Natural killer cell (primary cell): ENCODE measurements at regions of chr22 and their contacts with region 1.

Region 1: DNA sequence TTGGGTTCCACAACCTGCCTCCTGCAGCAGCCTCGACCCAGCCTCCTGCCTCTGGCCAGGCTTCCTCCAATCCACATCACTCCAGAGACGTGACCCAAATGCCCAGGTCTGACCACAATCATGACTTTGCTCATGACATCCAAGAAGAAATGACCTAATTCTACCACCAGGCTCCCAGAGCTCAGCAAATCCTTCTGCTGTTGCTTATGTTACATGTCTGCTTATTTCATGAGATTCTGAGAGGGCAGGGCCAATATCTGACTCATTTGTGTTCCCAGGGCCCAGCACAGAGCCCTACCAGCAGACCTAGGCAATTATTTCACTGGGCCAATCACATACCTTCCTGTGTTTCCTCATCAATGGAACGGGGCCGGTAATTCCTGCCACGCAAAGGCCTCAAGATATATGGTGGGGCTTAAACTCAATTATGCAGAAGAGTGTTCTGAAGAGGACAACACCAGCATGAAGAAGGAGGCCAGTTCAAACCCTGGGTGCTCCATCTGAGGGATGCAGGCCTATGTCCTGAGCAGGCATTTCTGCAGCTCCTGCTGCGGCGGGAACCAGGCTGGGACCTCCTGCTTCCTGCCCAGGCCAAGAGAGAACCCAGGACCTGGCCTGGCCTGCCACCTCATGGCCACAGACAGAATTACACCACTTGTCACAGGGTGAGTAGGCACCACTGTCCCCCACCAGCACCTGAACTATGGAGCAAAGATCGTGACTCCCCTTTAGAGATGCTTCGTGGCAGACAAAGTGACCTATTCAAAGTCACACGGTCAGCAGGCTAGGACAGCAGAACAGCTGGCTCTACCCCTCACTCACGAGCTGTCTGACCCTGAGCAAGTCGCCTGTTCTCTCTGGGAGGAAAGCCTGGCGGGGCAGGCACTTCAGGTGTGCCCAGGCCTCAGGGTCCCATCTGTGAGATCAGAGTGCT is 5.9 kb downstream of the CENPM start:
- DNase-seq: peak; percentile 83 to 94
- ATAC-seq: peak; percentile 86 to 91 (median 88)
- H3K4me3 ChIP-seq: no peak overlapping the region
- H3K4me3 Mint-ChIP-seq: no peak overlapping the region
- H3K27ac ChIP-seq: peak overlapping the region; percentile 98
- H3K27ac Mint-ChIP-seq: peak overlapping the region; percentile 83 to 91
- H3K4me1 ChIP-seq: peaks cover 57% of the 10 kb centered on the region
- H3K4me1 Mint-ChIP-seq: peaks cover 19 to 29% of the 10 kb centered on the region in 2 donors
- H3K27me3 ChIP-seq: no peaks in the 10 kb centered on the region
- H3K27me3 Mint-ChIP-seq: no peaks in the 10 kb centered on the region
- CTCF ChIP-seq: peak; percentile 88

Region 2: DNA sequence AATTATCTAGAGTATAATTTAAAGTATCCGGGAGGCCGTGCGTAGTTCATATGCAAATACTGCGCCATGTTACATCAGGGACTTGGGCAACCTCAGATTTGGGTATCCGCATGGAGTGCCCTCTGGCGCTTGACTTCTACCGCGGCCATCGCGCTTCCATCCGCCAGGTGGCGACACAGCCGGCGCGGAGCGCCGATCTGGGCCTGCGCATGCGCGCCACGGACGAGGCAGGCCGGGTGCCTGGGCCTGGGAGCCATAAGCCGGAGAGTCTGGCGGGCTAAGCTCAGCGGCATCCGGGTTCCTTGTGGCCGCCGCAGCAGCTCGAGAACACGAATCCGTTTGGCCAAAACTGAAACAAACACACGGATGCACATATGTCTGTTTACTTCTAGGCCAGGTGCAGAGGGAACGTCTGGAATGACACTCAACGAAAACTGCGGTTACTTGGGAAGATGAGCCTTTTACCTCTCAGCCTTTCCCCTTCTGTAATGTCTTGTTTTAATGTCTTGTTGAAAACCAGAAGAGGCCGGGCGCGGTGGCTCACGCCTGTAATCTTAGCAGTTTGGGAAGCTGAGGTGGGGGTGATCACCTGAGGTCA is 274.3 kb before region 1 on chr22:
- intact Hi-C with region 1: loop called (anchors 1 kb)
- DNase-seq: peak; percentile 94 to 98
- ATAC-seq: peak; percentile 94 to 98 (median 95)
- H3K4me3 ChIP-seq: peak overlapping the region; percentile 50
- H3K4me3 Mint-ChIP-seq: peak overlapping the region; percentile 88
- H3K27ac ChIP-seq: peak overlapping the region; percentile 92
- H3K27ac Mint-ChIP-seq: peak overlapping the region; percentile 92 to 93
- H3K4me1 ChIP-seq: peaks cover 14% of the 10 kb centered on the region
- H3K4me1 Mint-ChIP-seq: peaks cover 10 to 11% of the 10 kb centered on the region in 2 donors
- H3K27me3 ChIP-seq: no peaks in the 10 kb centered on the region
- H3K27me3 Mint-ChIP-seq: no peaks in the 10 kb centered on the region
- CTCF ChIP-seq: peak; percentile 99

Region 3: DNA sequence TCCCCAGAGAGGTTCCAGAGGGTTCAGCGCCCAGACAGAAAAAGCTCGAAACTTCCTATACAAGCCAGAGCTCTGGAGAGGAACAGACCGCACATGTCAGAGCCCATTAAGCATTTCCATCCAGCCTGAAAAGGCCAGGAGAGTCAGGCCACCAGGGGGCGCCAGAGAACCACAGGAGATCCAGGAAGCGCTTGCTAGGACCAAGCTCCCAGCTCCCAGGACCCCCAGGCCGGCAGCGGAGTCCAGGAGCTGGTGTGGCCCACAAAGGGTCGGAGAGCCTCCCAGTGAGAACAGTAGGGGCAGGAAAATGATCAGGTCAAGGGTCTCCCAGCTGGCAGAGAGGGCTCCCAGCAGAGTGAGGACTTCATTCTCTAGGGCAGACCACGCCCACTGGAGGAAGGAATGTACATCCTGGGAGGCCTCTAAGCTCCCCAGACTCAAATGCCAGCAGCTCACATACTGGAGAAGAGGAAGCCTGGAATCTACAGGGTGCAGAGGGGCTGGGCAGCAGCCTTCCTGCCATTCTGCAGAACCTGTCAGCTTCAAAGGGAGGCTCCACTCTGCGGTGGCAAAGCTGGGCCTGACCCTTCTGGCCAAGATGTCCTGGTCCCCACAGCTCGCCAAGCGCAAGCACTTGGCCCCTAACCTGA is 243.8 kb before region 1 on chr22:
- intact Hi-C with region 1: loop called (anchors 1 kb)
- DNase-seq: peak; percentile 91 to 92
- ATAC-seq: peak; percentile 80 to 83 (median 81)
- H3K4me3 ChIP-seq: no peak overlapping the region
- H3K4me3 Mint-ChIP-seq: peak overlapping the region; percentile 61
- H3K27ac ChIP-seq: peak overlapping the region; percentile 10
- H3K27ac Mint-ChIP-seq: peak overlapping the region; percentile 30 to 78
- H3K4me1 ChIP-seq: peaks cover 18% of the 10 kb centered on the region
- H3K4me1 Mint-ChIP-seq: peaks cover 6 to 13% of the 10 kb centered on the region in 2 donors
- H3K27me3 ChIP-seq: no peaks in the 10 kb centered on the region
- H3K27me3 Mint-ChIP-seq: no peaks in the 10 kb centered on the region
- CTCF ChIP-seq: peak; percentile 98

Region 4: GRCh38 chr22:41746567-41747400 is 194.3 kb before region 1 on chr22:
- intact Hi-C with region 1: loop called (anchors 1 kb)
- DNase-seq: peak; percentile 33 to 81
- ATAC-seq: peak; percentile 68 to 91 (median 79)
- H3K4me3 ChIP-seq: no peak overlapping the region
- H3K4me3 Mint-ChIP-seq: no peak overlapping the region
- H3K27ac ChIP-seq: no peak overlapping the region
- H3K27ac Mint-ChIP-seq: no peak overlapping the region
- H3K4me1 ChIP-seq: peaks cover 5% of the 10 kb centered on the region
- H3K4me1 Mint-ChIP-seq: peaks cover 8 to 14% of the 10 kb centered on the region in 2 donors
- H3K27me3 ChIP-seq: peaks cover 2% of the 10 kb centered on the region
- H3K27me3 Mint-ChIP-seq: peaks cover 0 to 8% of the 10 kb centered on the region in 2 donors
- CTCF ChIP-seq: peak; percentile 39

Region 5: DNA sequence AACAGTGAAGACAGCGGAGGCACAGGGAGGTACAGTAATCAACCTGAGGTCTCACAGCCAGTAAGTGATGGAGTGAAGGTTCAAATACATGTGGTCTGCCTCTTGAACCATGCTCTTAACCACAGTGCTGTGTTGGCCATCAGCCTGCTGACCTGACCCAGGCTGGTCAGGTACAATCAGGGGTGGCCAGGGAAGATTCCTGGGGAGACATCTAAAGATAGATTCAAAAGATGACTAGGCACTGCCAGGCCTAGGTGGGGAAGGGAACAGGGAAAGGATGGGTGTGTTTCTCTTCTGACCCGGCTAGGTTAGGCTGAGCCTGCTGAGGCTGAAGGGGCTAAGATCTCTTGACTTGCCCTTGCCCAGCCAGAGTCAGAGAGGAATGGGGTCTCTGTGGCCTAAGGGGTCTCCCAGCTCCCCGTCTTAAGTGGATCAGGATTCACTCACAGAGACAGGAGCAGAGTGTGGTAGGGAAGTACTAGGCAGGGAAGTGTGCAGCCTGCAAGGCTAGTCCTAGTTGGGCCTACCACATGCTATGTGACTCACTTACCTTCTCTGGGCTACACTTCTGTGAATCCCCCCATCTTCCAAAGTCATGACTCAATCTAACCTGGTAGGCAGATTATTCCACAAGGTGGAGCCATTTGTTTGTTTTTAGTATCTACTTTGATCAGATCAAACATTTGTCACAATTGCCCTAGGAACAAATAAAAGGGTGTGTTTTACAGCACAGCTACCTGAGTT is 118.6 kb before region 1 on chr22:
- intact Hi-C with region 1: loop called (anchors 1 kb)
- DNase-seq: peak in 1 of 2 donors; percentile 85
- ATAC-seq: peak; percentile 68 to 97 (median 81)
- H3K4me3 ChIP-seq: no peak overlapping the region
- H3K4me3 Mint-ChIP-seq: no peak overlapping the region
- H3K27ac ChIP-seq: no peak overlapping the region
- H3K27ac Mint-ChIP-seq: peak overlapping the region in 1 of 2 donors; percentile 61
- H3K4me1 ChIP-seq: no peaks in the 10 kb centered on the region
- H3K4me1 Mint-ChIP-seq: peaks cover 9 to 27% of the 10 kb centered on the region in 2 donors
- H3K27me3 ChIP-seq: no peaks in the 10 kb centered on the region
- H3K27me3 Mint-ChIP-seq: no peaks in the 10 kb centered on the region
- CTCF ChIP-seq: peak; percentile 61

Region 6: DNA sequence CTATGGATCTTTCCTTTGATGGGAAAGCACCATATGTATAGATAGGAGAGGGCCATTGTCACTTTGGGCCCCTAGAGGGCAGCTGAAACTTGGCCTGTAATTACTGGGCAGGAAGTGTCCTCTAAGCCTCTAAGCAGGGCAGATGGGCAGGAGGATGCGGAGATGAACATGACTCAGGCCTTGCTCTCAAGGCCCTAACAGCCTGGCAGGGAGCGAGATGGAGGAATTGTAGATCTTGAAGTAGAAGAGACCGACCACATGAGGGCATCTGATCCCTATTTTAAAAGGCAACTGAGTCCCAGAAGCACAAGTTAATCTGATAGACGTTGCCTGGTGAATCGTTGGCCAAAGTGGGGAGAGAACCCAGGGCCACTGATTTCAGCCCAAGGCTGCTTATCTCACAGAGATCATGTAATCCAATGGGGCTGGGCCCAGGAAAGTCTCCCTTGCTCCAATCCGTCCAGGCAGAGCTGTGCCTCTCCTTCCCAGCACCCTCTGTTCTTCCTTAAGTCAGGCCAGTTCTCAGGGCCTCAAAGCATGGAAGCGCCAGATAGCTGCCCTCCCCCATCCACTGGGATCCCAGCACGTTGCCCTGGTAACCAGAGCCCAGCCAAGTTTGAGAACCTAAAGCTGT is 25.6 kb after region 1 on chr22:
- intact Hi-C with region 1: no loop called
- DNase-seq: peak in 1 of 2 donors; percentile 75
- ATAC-seq: peak; percentile 43 to 77 (median 58)
- H3K4me3 ChIP-seq: no peak overlapping the region
- H3K4me3 Mint-ChIP-seq: no peak overlapping the region
- H3K27ac ChIP-seq: no peak overlapping the region
- H3K27ac Mint-ChIP-seq: no peak overlapping the region
- H3K4me1 ChIP-seq: no peaks in the 10 kb centered on the region
- H3K4me1 Mint-ChIP-seq: peaks cover 0 to 6% of the 10 kb centered on the region in 2 donors
- H3K27me3 ChIP-seq: no peaks in the 10 kb centered on the region
- H3K27me3 Mint-ChIP-seq: no peaks in the 10 kb centered on the region
- CTCF ChIP-seq: no peak

Region 7: DNA sequence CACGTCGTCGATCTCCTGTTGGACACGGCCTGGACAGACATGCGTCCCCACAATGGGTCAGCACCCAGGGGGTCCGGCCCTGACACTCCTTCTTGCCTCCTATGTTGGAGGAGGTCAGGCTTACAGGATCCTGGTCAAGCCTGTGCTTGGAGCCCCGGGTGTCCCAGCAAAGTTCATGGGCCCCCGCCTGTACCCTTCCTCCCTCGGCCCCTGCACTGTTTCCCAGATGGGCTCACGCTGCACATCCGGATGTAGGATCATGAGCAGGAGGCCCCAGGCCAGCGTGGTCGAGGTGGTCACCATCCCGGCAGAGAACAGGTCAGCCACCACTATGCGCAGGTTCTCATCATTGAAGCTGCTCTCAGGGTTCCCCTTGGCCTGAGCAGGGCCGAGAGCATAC is 186.5 kb after region 1 on chr22:
- intact Hi-C with region 1: no loop called
- DNase-seq: no peak
- ATAC-seq: no peak
- H3K4me3 ChIP-seq: no peak overlapping the region
- H3K4me3 Mint-ChIP-seq: no peak overlapping the region
- H3K27ac ChIP-seq: no peak overlapping the region
- H3K27ac Mint-ChIP-seq: no peak overlapping the region
- H3K4me1 ChIP-seq: no peaks in the 10 kb centered on the region
- H3K4me1 Mint-ChIP-seq: peaks cover 0 to 4% of the 10 kb centered on the region in 2 donors
- H3K27me3 ChIP-seq: no peaks in the 10 kb centered on the region
- H3K27me3 Mint-ChIP-seq: no peaks in the 10 kb centered on the region
- CTCF ChIP-seq: no peak